H1 (cell line): ENCODE measurements at regions of chr13 and their contacts with region 1.

Region 1: DNA sequence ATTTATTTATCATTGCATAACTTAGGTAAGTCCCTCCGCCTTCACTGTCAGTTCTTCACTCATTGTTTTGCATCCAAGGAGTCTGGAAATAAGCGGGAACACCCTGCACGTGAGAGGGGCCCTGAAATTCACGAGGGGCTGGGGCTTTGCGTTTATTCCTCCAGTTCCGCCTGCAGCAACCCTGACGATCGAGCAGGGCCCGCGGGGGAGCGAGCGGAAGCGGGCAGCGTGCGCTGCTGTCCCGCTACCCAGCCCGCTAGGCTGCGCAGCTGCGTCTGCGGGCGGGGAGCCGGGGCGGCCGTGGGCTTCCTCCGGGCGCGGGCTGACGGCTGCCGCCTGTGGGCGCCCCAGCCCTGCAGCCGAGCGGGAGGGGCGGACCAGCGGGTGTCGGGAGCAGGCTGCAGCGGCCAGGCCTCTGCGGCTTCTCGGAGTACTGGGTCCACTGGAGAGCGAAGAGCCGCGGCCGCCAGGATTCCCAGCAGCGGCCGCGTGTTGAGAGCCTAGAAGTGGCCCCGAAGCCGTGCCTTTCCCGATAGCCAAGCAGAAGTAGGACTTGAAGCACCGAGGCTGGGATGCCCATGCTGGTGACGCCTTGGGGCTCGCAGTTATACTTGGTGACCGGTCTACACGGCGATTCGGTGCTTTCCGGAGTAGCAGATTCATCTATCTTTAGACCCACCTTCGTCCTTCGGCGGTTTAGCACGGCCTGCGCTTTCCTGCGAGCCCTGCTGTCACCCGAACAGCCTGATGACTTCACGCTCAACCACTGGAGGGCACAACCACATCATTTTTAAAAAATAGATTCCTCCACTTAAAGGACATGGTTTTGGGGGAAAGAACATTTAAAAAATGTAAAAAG is 32.9 kb upstream of the SACS start:
- DNase-seq: peak in 1 of 2 experiments; percentile 82
- H3K4me3 ChIP-seq: peak overlapping the region; percentile 23 to 55 (median 41)
- H3K27ac ChIP-seq: no peak overlapping the region
- H3K4me1 ChIP-seq: peaks cover 0 to 10% (median 7%) of the 10 kb centered on the region in 4 experiments; a peak in 5 of 7 replicates
- H3K27me3 ChIP-seq: peaks cover 0 to 10% (median 4%) of the 10 kb centered on the region in 4 experiments; a peak in 4 of 7 replicates
- CTCF ChIP-seq: peak; percentile 55 to 65 (median 58)
- EP300 ChIP-seq: no peak
- POLR2A ChIP-seq: no peak
- RAD21 ChIP-seq: peak; percentile 77 to 82

Region 2: DNA sequence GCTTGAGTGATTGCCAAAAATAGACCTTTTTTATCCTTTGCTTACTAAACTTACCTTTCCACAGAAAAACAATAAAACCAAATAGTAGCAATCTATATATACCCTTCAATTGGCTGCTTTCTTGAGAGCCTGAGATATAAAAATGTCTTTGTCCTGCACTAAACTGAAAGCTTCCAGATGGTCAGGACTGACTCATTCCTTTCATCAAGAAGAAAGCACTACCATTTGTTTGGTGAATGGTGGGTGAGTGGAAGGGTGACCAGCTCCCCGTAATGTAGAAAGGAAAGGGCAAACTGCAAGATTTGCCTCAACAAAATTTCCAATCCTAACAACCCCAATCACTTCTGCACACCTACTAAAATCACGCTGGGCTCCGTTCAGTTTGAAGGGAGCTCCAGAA is 100.7 kb before region 1 on chr13:
- CTCF ChIA-PET with region 1: no interaction called
- POLR2A ChIA-PET with region 1: no interaction called
- DNase-seq: no peak
- H3K4me3 ChIP-seq: no peak overlapping the region
- H3K27ac ChIP-seq: no peak overlapping the region
- H3K4me1 ChIP-seq: no peaks in the 10 kb centered on the region
- H3K27me3 ChIP-seq: no peaks in the 10 kb centered on the region
- CTCF ChIP-seq: no peak
- EP300 ChIP-seq: no peak
- POLR2A ChIP-seq: no peak
- RAD21 ChIP-seq: no peak

Region 3: DNA sequence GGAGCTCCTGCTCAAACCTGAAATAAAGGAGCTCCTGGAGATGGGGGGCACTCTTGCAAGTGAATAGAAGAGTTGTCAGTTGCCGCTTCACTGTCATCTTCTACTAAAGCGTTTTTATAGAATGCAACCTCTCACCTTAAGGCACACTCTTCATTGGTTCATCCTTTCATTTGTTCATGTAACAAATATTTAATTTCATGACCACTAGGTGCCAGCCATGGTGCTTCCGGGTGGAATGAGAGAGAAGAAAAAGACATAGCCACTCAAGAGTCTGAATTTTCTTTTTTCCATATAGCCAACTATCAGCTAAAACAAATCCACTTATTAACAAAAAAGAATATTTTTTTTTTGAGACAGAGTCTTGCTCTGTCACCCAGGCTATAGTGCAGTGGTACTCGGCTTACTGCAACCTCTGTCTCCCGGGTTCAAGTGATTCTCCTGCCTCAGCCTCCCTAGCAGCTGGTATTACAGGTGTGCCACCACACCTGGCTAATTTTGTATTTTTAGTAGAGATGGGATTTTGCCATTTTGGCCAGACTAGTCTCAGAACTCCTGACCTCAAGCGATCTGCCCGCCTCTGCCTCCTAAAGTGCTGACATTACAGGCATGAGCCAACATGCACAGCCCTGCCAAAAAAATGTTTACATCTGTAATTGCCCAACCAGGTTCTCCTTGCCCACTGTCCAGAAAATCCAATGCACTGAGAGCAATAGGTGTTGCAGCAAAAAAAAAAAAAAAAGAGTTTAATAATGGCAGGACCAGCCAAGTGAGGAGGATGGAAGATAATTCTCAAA is 10.8 kb before region 1 on chr13:
- CTCF ChIA-PET with region 1: interaction called, 11 read pairs
- POLR2A ChIA-PET with region 1: no interaction called
- DNase-seq: no peak
- H3K4me3 ChIP-seq: no peak overlapping the region
- H3K27ac ChIP-seq: no peak overlapping the region
- H3K4me1 ChIP-seq: peaks cover 0 to 11% (median 9%) of the 10 kb centered on the region in 4 experiments; a peak in 5 of 7 replicates
- H3K27me3 ChIP-seq: no peaks in the 10 kb centered on the region
- CTCF ChIP-seq: no peak
- EP300 ChIP-seq: no peak
- POLR2A ChIP-seq: no peak
- RAD21 ChIP-seq: no peak

Region 4: GRCh38 chr13:23567906-23568460 is 101.6 kb after region 1 on chr13:
- CTCF ChIA-PET with region 1: interaction called, 12 read pairs
- POLR2A ChIA-PET with region 1: no interaction called
- DNase-seq: no peak
- H3K4me3 ChIP-seq: no peak overlapping the region
- H3K27ac ChIP-seq: no peak overlapping the region
- H3K4me1 ChIP-seq: peaks cover 0 to 8% (median 2%) of the 10 kb centered on the region in 4 experiments; a peak in 5 of 7 replicates
- H3K27me3 ChIP-seq: no peaks in the 10 kb centered on the region
- CTCF ChIP-seq: peak in 2 of 3 experiments; percentile 2 to 18; a peak in 2 of 4 replicates
- EP300 ChIP-seq: no peak
- POLR2A ChIP-seq: no peak
- RAD21 ChIP-seq: peak; percentile 34 to 49; a peak in 3 of 4 replicates

Region 5: DNA sequence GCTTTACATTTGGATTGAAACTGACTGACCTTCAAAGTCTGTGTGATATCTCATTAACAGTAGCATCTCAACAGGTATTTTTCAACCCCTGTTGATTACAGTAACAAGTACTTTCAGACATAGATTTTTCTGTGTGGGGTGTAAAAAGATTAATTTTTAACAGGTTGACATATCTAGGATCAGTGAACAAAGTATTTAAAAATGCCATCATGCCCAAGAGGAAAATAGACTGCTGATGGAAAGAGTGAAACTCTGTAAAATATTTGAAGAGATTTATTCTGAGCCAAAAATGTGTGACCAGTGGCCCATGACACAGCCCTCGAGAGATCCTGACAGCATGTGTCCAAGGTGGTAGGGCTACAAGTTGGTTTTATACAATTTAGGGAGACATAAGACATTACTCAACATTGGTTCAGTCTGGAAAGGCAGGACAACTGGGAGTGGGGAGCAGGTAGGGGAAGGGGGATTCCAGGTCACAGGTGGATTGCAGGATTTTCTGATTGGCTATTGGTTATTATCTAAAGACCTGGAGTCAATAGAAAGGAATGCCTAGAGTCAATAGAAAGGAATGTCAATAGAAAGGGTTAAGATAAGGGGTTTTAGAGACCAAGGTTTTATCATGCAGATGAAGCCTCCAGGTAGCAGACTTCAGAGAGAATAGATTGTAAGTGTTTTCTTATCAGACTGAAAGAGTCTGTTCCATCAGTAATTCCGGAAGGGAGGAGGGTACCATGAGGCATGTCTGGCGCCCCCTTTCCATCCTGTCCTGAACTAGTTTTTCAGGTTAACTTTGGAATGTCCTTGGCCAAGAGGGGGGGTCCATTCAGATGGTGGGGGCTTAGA is 132.9 kb after region 1 on chr13:
- CTCF ChIA-PET with region 1: no interaction called
- POLR2A ChIA-PET with region 1: no interaction called
- DNase-seq: peak in 1 of 2 experiments; percentile 59
- H3K4me3 ChIP-seq: peak overlapping the region in 1 of 4 experiments; percentile 18; a peak in 1 of 8 replicates
- H3K27ac ChIP-seq: no peak overlapping the region
- H3K4me1 ChIP-seq: peaks cover 0 to 5% (median 1%) of the 10 kb centered on the region in 4 experiments; a peak in 2 of 7 replicates
- H3K27me3 ChIP-seq: no peaks in the 10 kb centered on the region
- CTCF ChIP-seq: peak in 2 of 3 experiments; percentile 31 to 52; a peak in 2 of 4 replicates
- EP300 ChIP-seq: peak in 1 of 2 experiments; percentile 89; a peak in 2 of 3 replicates
- POLR2A ChIP-seq: no peak; a peak in 1 of 3 replicates
- RAD21 ChIP-seq: peak in 1 of 2 experiments; percentile 22; a peak in 2 of 4 replicates